B cell (primary cell): ENCODE measurements at regions of chr17 and their contacts with region 1.

Region 1: DNA sequence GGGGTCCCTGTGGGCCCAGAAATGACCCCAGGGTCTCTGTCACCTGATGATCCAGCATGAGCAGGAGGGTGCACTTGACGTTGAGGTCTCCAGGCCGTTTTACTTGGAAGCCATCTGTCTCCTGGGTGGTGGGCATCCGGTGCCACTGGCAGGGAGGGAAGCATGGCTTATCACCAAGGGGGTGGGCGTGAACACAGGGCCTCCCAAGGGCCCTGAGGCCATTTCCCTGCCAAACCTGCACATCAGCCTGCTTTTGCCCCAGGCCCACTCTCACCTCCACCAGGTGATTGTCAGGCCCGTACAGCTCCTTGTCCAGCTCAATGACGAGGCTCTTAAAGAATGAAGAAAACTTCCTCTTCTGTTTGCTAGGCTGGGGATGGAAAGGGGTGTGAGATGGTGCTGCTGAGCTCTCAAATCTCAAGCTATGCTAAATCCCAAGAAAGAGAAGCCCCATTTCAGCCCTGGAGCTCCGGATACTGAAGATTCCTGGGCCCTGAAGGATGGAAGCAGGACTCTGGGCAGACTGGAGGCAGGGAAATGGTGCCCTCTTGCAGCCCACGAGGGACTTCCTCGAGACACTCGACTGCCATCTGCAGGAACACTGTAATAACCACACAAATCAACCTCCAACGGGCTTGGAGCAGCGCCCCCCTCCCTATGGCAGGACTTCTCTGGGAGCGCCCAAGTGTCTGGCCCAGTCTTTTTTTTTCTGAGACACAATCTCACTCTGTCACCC is 7.1 kb upstream of the FTSJ3 start:
- DNase-seq: peak; percentile 77
- ATAC-seq: peak; percentile 86
- H3K4me3 ChIP-seq: no peak overlapping the region
- H3K4me3 Mint-ChIP-seq: no peak overlapping the region
- H3K27ac ChIP-seq: peak overlapping the region in 1 of 2 donors; percentile 13
- H3K27ac Mint-ChIP-seq: peak overlapping the region; percentile 72
- H3K4me1 ChIP-seq: peaks cover 26 to 36% of the 10 kb centered on the region in 2 donors
- H3K4me1 Mint-ChIP-seq: peaks cover 45% of the 10 kb centered on the region
- H3K27me3 ChIP-seq: no peaks in the 10 kb centered on the region
- H3K27me3 Mint-ChIP-seq: no peaks in the 10 kb centered on the region
- CTCF ChIP-seq: peak; percentile 73

Region 2: GRCh38 chr17:63685041-63685440 is 149.6 kb before region 1 on chr17:
- CTCF ChIA-PET with region 1: no interaction called
- POLR2A ChIA-PET with region 1: no interaction called
- intact Hi-C with region 1: no loop called
- DNase-seq: no peak
- ATAC-seq: no peak
- H3K4me3 ChIP-seq: no peak overlapping the region
- H3K4me3 Mint-ChIP-seq: no peak overlapping the region
- H3K27ac ChIP-seq: no peak overlapping the region
- H3K27ac Mint-ChIP-seq: no peak overlapping the region
- H3K4me1 ChIP-seq: no peaks in the 10 kb centered on the region
- H3K4me1 Mint-ChIP-seq: no peaks in the 10 kb centered on the region
- H3K27me3 ChIP-seq: no peaks in the 10 kb centered on the region
- H3K27me3 Mint-ChIP-seq: no peaks in the 10 kb centered on the region
- CTCF ChIP-seq: no peak

Region 3: GRCh38 chr17:63809970-63810369 is 24.6 kb before region 1 on chr17:
- CTCF ChIA-PET with region 1: interaction called, 14 read pairs
- POLR2A ChIA-PET with region 1: no interaction called
- intact Hi-C with region 1: no loop called
- DNase-seq: peak; percentile 43
- ATAC-seq: peak; percentile 54
- H3K4me3 ChIP-seq: no peak overlapping the region
- H3K4me3 Mint-ChIP-seq: no peak overlapping the region
- H3K27ac ChIP-seq: peak overlapping the region in 1 of 2 donors; percentile 54
- H3K27ac Mint-ChIP-seq: peak overlapping the region; percentile 75
- H3K4me1 ChIP-seq: peaks cover 9 to 10% of the 10 kb centered on the region in 2 donors
- H3K4me1 Mint-ChIP-seq: peaks cover 11% of the 10 kb centered on the region
- H3K27me3 ChIP-seq: no peaks in the 10 kb centered on the region
- H3K27me3 Mint-ChIP-seq: no peaks in the 10 kb centered on the region
- CTCF ChIP-seq: no peak